Heart left ventricle (tissue), 16 donors: ENCODE measurements at regions of chr21 and their contacts with region 1.

Region 1: GRCh38 chr21:29091032-29091431 is 17.6 kb upstream of the CCT8 start:
- DNase-seq: no peak
- ATAC-seq: no peak
- H3K4me3 ChIP-seq: no peak overlapping the region
- H3K27ac ChIP-seq: peak overlapping the region in 1 of 12 donors; percentile 0
- H3K4me1 ChIP-seq: peaks cover 0 to 11% (median 0%) of the 10 kb centered on the region in 12 donors
- H3K27me3 ChIP-seq: no peaks in the 10 kb centered on the region
- CTCF ChIP-seq: no peak
- POLR2A ChIP-seq: no peak

Region 2: DNA sequence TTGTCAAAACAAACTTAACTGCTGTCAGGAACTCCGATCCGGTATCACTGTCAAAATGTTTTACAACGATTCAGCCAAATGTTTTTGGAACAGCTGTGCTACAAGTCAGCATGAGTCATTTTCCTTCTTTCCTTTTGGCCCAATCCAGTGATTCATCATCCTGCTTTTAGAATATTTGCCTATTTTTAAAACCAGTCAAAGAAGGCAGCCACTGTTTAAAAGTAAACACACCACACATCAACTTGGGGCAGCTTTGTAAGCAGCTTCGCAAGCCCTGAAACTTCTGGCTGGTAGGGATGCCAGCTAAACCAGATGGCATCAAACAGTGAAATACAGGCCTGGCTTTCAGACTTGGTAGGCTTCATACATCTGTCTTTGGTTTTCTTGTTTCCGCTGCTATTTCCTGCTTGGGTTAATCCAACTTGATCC is 54.3 kb after region 1 on chr21:
- intact Hi-C with region 1: loop called in 3 of 10 experiments (anchors 5 to 10 kb)
- DNase-seq: no peak
- ATAC-seq: peak; percentile 53 to 87 (median 79)
- H3K4me3 ChIP-seq: no peak overlapping the region
- H3K27ac ChIP-seq: peak overlapping the region; percentile 23 to 85 (median 74)
- H3K4me1 ChIP-seq: peaks cover 0 to 49% (median 26%) of the 10 kb centered on the region in 12 donors
- H3K27me3 ChIP-seq: no peaks in the 10 kb centered on the region
- CTCF ChIP-seq: no peak
- POLR2A ChIP-seq: no peak

Region 3: DNA sequence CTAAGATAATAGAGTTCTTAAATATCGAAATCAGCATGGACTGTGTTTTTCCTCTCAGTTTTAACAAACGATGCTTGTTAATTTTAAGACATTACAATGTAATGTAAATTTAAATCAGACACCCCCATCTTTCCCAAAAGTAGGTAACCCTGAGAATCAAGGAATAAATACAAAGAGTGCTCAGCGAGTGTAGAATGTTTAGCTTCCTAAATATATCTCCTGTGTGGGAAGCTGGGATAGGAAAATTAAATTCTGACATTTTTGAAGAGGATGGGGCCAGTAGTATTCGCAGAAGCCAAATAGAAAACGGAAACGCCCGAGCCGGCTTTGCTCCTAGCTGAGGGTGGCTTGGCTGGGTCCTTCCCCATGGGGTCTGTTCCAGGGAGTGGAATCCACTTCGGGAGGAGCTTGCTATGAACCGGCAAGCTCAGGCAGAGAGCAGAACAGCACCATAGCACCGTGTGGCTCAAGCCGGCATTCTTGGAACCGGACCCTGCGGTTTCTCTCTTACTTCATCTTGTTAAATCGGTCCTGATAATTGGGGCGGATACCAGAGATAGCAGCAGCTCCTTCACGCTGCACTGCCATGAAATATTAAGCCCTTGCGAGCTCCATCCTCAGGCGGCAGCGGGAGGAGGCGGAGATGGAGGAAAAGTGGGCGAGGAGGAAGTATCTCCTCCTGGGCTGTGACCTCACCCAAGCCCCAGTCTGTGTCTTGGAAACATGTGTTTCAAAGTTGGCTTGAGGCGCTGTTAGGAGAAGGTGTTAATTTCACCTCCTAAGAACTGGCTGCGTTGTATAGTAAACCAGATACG is 64.3 kb after region 1 on chr21:
- intact Hi-C with region 1: loop called in 7 of 10 experiments (anchors 5 to 10 kb)
- DNase-seq: peak; percentile 75 to 83 (median 77)
- ATAC-seq: peak; percentile 89 to 95 (median 94)
- H3K4me3 ChIP-seq: peak overlapping the region in 10 of 12 donors; percentile 24 to 49 (median 42)
- H3K27ac ChIP-seq: peak overlapping the region in 11 of 12 donors; percentile 5 to 66 (median 54)
- H3K4me1 ChIP-seq: peaks cover 0 to 30% (median 8%) of the 10 kb centered on the region in 12 donors
- H3K27me3 ChIP-seq: no peaks in the 10 kb centered on the region
- CTCF ChIP-seq: peak in 1 of 12 donors; percentile 22
- POLR2A ChIP-seq: no peak

Region 4: GRCh38 chr21:29298348-29299045 is 207.5 kb after region 1 on chr21 and contains the start of gene BACH1:
- intact Hi-C with region 1: no loop called
- DNase-seq: peak; percentile 91 to 95 (median 93)
- ATAC-seq: peak; percentile 75 to 94 (median 91)
- H3K4me3 ChIP-seq: peak within 1 kb of the TSS; percentile 52 to 98 (median 75)
- H3K27ac ChIP-seq: peak within 1 kb of the TSS; percentile 83 to 99 (median 93)
- H3K4me1 ChIP-seq: peaks cover 4 to 55% (median 35%) of the 10 kb centered on the region in 12 donors
- H3K27me3 ChIP-seq: no peaks in the 10 kb centered on the region
- CTCF ChIP-seq: peak; percentile 23 to 72 (median 46)
- POLR2A ChIP-seq: peak in 1 of 2 donors; percentile 91
- total RNA-seq, gene BACH1: 16.7 to 83.4 (median 40.0) TPM

Region 5: GRCh38 chr21:29372063-29372802 is 281.2 kb after region 1 on chr21:
- intact Hi-C with region 1: loop called (anchors 1 to 2 kb)
- DNase-seq: peak in 4 of 5 donors; percentile 34 to 66 (median 46)
- ATAC-seq: peak; percentile 73 to 94 (median 88)
- H3K4me3 ChIP-seq: no peak overlapping the region
- H3K27ac ChIP-seq: no peak overlapping the region
- H3K4me1 ChIP-seq: peaks cover 0 to 3% (median 0%) of the 10 kb centered on the region in 12 donors
- H3K27me3 ChIP-seq: no peaks in the 10 kb centered on the region
- CTCF ChIP-seq: peak; percentile 65 to 80 (median 78)
- POLR2A ChIP-seq: no peak

Region 6: GRCh38 chr21:29849735-29850176 is 758.7 kb after region 1 on chr21:
- intact Hi-C with region 1: loop called in 4 of 10 experiments (anchors 2 to 10 kb)
- DNase-seq: peak in 4 of 5 donors; percentile 19 to 34 (median 30)
- ATAC-seq: peak in 3 of 4 donors; percentile 74 to 90 (median 86)
- H3K4me3 ChIP-seq: no peak overlapping the region
- H3K27ac ChIP-seq: no peak overlapping the region
- H3K4me1 ChIP-seq: no peaks in the 10 kb centered on the region
- H3K27me3 ChIP-seq: peaks cover 0 to 5% (median 0%) of the 10 kb centered on the region in 9 donors
- CTCF ChIP-seq: peak; percentile 45 to 84 (median 67)
- POLR2A ChIP-seq: no peak